ENCODE measurements at regions of chr1 and their contacts with region 1.

Region 1: DNA sequence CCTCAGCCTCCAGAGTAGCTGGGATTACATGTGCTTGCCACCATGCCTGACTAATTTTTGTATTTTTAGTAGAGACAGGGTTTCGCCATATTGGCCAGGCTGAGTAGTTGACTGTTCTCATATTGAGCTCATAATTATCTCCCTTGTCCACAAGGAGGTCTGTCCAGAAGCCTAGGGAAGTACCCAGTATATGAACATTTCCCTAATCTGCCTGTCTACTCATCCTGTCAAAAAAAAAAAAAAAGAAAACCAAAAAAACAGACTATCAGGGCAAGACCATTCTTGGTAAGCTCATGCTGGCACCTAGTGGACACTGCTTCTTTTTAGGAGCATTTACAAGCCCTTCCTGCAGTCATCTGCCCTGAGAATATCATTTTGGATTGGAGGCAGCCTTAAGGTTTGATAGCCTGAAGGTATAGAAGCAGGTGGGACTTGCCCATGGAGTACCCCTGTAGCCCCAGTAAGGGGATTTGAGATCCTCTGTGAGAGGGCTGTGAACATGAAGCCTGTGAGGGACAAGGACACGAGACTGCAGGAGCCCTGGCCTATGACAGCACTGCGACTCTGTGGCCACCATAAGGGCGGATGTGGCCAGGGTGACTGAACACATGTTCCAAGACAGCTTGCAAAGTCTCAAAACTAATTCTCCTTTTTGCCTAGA is 10.8 kb upstream of the DUSP12 start:
- DNase-seq: peak; percentile 84
- H3K4me3 Mint-ChIP-seq: peak overlapping the region; percentile 11
- H3K27ac Mint-ChIP-seq: peak overlapping the region; percentile 77
- H3K4me1 Mint-ChIP-seq: peaks cover 48% of the 10 kb centered on the region
- H3K27me3 Mint-ChIP-seq: peaks cover 20% of the 10 kb centered on the region

Region 2: GRCh38 chr1:161486806-161487741 is 251.7 kb before region 1 on chr1:
- CTCF ChIA-PET with region 1: interaction called, 67 read pairs
- POLR2A ChIA-PET with region 1: interaction called, 4 read pairs
- DNase-seq: peak; percentile 46
- H3K4me3 Mint-ChIP-seq: no peak overlapping the region
- H3K27ac Mint-ChIP-seq: no peak overlapping the region
- H3K4me1 Mint-ChIP-seq: peaks cover 24% of the 10 kb centered on the region
- H3K27me3 Mint-ChIP-seq: peaks cover 44% of the 10 kb centered on the region

Region 3: DNA sequence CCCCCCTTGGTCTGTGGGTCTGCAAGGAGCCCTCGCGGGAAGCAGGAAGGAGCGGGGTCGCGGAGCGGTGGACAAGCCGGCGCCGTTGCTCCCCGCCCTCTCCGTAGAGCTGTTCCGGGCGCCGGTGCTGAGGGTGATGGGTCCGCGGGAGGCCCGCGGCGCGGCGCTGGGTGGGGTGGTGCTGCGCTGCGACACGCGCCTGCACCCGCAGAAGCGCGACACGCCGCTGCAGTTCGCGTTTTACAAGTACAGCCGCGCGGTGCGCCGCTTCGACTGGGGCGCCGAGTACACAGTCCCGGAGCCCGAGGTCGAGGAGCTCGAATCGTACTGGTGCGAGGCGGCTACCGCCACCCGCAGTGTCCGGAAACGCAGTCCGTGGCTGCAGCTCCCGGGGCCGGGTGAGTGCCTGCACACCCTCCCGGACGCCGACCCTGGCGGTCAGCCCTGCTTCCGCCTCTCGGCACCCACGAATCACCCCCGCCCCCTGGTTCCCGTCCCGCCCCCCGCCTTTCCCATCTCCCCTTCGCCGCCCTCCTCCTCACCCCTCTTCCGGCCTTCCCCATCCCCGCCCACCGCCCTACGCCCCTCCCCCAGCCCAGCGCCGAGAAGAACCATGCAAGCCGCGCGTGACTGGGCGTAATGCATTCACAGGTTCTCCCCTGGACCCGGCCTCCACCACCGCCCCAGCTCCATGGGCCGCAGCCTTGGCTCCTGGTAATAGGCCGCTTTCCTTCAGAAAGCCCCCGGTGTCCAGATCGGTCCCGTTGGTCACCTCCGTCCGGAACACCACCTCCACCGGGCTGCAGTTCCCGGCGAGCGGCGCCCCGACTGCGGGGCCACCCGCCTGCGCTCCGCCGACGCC is 11.9 kb before region 1 on chr1:
- CTCF ChIA-PET with region 1: interaction called, 17 read pairs
- POLR2A ChIA-PET with region 1: interaction called, 22 read pairs
- DNase-seq: peak; percentile 74
- H3K4me3 Mint-ChIP-seq: peak overlapping the region; percentile 78
- H3K27ac Mint-ChIP-seq: peak overlapping the region; percentile 44
- H3K4me1 Mint-ChIP-seq: peaks cover 58% of the 10 kb centered on the region
- H3K27me3 Mint-ChIP-seq: peaks cover 66% of the 10 kb centered on the region

Region 4: GRCh38 chr1:161749509-161750407 is 11.0 kb after region 1 on chr1 and contains the start of gene DUSP12:
- CTCF ChIA-PET with region 1: interaction called, 28 read pairs
- POLR2A ChIA-PET with region 1: interaction called, 18 read pairs
- DNase-seq: peak; percentile 89
- H3K4me3 Mint-ChIP-seq: peak within 1 kb of the TSS; percentile 98
- H3K27ac Mint-ChIP-seq: peak within 1 kb of the TSS; percentile 97
- H3K4me1 Mint-ChIP-seq: peaks cover 51% of the 10 kb centered on the region
- H3K27me3 Mint-ChIP-seq: peaks cover 8% of the 10 kb centered on the region
- total RNA-seq, gene DUSP12: 23.4 to 23.5 TPM